GM18951 (cell line): ENCODE measurements at regions of chr6 and their contacts with region 1.

Region 1: DNA sequence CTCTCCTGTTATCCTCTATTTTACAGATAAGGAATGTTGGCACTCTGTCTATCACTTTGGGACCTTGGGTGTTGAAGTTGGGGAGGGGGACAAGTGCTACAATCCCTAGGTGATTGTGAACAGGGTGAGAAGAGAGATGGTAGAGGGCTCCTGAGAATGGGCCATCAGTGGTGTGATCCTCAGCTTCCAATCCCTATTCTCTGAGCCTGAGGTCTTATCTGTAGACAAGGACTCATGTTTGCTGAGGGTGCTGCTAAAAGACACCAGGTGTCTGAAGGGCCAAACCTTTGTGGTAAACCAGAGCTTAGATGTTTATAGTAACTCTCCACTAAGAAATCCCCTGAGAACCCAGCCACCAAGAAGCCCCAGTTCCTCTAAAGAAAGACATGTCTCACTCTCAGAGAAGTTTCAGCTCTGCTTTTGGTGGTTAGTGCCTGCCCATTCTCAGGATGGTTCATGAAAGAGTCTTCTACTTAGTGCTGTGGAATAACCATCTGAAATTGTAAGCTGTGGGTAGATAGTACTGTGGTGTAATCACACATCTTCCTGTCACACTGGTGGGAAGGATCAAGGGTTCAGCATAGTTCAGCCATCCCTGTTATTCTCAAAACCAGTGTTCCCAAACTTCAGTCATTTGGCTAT is 58.2 kb upstream of the IL20RA start:
- POLR2A ChIP-seq: no peak

Region 2: GRCh38 chr6:137165375-137166246 is 62.6 kb after region 1 on chr6:
- in situ Hi-C with region 1: loop called (anchors 10 kb)
- POLR2A ChIP-seq: no peak

Region 3: GRCh38 chr6:137283940-137284810 is 181.2 kb after region 1 on chr6:
- in situ Hi-C with region 1: no loop called
- POLR2A ChIP-seq: no peak